Mammary epithelial cell (primary cell): ENCODE measurements at regions of chr20 and their contacts with region 1.

Region 1: GRCh38 chr20:37519508-37520128 is 1.4 kb upstream of the NNAT start:
- DNase-seq: no peak
- H3K4me3 ChIP-seq: no peak overlapping the region
- H3K27ac ChIP-seq: no peak overlapping the region
- H3K4me1 ChIP-seq: peaks cover 43% of the 10 kb centered on the region
- H3K27me3 ChIP-seq: no peaks in the 10 kb centered on the region
- CTCF ChIP-seq: peak in 1 of 2 donors; percentile 14

Region 2: GRCh38 chr20:37406010-37406998 is 113.3 kb before region 1 on chr20:
- CTCF ChIA-PET with region 1: no interaction called
- dilution Hi-C with region 1: no loop called
- in situ Hi-C with region 1: loop called in 1 of 2 experiments (anchors 10 kb)
- intact Hi-C with region 1: no loop called
- DNase-seq: peak; percentile 18
- H3K4me3 ChIP-seq: peak overlapping the region; percentile 31 to 37 (median 35)
- H3K27ac ChIP-seq: no peak overlapping the region
- H3K4me1 ChIP-seq: peaks cover 15% of the 10 kb centered on the region
- H3K27me3 ChIP-seq: no peaks in the 10 kb centered on the region
- CTCF ChIP-seq: no peak

Region 3: DNA sequence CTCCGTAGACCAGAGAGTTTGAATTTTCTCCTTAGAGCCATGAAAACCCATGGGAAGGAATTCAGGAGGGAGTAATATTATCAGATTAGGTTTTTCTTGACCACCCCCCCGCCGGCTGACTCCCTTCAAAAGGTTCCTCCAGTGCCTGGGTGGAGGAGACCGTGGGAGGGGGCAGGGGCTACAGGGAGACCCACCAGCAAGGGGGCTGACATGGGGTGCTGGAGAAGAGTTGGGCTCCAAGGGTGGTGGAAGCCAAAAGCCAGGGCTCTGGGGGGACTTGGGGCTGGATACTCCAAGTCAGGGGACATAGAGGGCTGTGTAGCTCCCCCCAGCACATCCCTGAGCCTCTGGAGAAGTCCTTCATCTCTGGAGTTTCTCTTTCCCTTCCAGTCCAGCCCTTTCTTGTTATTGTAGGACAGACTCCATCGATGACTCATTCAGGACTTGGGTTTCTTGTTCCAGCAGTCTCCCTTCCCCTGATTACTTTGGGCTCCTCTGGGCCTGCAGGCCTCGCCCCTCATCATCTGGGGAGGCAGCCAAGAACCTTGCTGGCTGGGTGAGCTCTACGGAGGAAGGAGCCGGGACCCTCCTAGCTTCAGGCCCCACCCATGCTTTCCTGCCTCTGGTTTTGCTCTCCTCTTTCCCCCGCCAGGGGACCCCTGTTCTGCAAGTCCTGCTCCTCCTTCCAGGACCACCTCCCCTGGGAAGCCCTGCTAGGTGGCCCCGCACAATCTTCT is 751.4 kb after region 1 on chr20:
- CTCF ChIA-PET with region 1: no interaction called
- dilution Hi-C with region 1: no loop called
- in situ Hi-C with region 1: no loop called
- intact Hi-C with region 1: no loop called
- DNase-seq: peak; percentile 91
- H3K4me3 ChIP-seq: no peak overlapping the region
- H3K27ac ChIP-seq: no peak overlapping the region
- H3K4me1 ChIP-seq: peaks cover 40% of the 10 kb centered on the region
- H3K27me3 ChIP-seq: no peaks in the 10 kb centered on the region
- CTCF ChIP-seq: no peak